ENCODE measurements at regions of chr9 and their contacts with region 1.

Region 1: DNA sequence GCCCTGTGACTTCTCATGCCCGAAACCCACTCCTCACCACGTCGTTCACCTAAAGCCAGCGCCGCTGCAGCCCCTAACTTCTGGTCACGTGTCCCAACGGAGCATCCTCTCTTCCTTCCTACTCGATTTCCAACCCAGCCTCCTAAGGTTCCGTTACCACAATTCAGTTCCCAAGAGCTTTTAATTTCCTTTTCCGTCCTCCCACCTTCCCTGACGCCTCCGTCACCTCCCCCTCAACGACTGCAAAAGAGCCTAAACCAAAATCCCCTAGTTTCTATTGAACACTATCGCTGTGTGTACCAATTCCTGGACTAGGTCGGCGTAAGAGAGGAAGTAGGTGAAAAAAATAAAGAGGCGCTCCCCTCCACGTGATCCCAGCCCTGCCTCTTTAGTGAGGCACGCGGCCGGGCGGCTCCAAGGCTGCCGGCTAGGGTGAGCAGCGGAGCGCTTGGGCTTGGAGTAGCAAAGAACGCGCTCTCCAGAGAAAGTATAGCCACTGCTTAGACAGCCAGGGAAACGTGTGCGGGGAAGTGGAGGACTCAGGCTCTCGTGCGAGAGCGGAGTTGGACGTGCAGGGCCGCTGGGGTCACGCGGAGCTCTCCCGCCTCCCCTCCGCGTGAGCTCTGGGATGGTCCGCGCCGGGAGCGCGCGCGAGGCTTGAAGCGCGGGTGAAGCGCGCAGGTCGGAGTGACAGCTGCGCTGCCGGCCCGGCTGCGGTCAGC is at the starts of genes CENPP and NOL8:
- DNase-seq: peak; percentile 95
- H3K4me3 Mint-ChIP-seq: peak within 1 kb of the TSS; percentile 98
- H3K27ac Mint-ChIP-seq: peak within 1 kb of the TSS; percentile 97
- H3K4me1 Mint-ChIP-seq: peaks cover 31% of the 10 kb centered on the region
- H3K27me3 Mint-ChIP-seq: no peaks in the 10 kb centered on the region
- total RNA-seq, gene CENPP: 26.9 and 27.5 TPM in 2 replicates
- total RNA-seq, gene NOL8: 84.9 and 90.9 TPM in 2 replicates

Region 2: DNA sequence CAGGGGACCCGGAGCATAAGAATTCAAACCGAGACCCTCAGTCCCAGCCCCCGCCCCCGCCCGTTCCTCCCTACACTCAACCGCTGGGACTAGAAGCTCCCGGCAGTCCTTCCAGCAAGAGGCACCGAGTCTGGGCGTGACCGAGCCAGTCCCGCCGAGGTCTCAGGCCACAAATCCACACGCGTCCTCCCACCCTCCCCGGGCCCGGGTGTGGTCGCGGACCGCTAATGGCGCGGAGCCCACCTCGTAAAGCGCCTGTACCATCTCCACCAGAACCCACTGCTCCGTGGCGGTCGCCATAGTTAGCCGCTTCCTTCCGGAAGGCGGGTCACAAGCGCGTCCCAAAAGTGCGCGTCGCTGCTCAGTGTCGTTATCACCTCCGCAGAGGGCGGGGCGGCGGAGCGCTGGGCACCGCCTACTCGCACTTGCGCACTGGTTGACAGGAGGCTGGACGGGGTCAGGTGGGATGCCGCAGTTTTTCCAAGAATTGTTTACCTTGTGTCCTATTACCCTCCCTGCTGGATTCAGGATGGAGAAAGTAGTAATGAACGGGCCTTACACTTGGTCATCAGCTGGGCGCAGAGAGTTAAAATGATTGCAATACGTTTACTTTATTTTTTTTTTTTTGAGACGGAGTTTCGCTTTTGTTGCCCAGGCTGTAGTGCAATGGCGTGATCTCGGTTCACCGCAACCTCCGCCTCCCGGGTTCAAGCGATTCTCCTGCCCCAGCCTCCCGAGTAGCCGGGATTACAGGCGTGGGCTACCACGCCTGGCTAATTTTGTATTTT is 210.2 kb before region 1 on chr9 and contains the start of gene SPTLC1:
- intact Hi-C with region 1: loop called (anchors 10 kb)
- DNase-seq: peak; percentile 99
- H3K4me3 Mint-ChIP-seq: peak within 1 kb of the TSS; percentile 97
- H3K27ac Mint-ChIP-seq: peak within 1 kb of the TSS; percentile 98
- H3K4me1 Mint-ChIP-seq: peaks cover 21% of the 10 kb centered on the region
- H3K27me3 Mint-ChIP-seq: peaks cover 2% of the 10 kb centered on the region
- total RNA-seq, gene SPTLC1: 62.5 and 64.9 TPM in 2 replicates

Region 3: DNA sequence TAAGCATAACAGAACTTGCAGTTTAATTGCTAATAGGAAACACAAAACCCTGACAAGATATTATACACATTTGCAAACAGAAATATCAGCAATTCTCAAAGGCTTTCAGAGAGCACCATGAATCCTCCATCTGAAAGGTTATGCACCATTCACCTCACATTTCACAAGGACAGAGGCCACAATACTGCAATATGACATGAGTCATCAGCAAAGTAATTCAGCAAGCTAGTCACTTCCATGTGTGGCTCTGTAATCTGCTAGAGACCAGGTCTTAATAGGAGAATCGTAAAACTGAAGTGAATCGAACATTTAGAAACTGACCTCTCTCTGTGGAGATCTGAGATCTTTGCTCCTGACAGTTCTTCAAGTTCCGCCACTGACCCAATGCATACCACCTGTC is 60.3 kb before region 1 on chr9:
- intact Hi-C with region 1: no loop called
- DNase-seq: no peak
- H3K4me3 Mint-ChIP-seq: no peak overlapping the region
- H3K27ac Mint-ChIP-seq: no peak overlapping the region
- H3K4me1 Mint-ChIP-seq: no peaks in the 10 kb centered on the region
- H3K27me3 Mint-ChIP-seq: no peaks in the 10 kb centered on the region

Region 4: GRCh38 chr9:92634712-92635605 is 309.5 kb after region 1 on chr9:
- intact Hi-C with region 1: loop called (anchors 1 kb)
- DNase-seq: peak; percentile 90
- H3K4me3 Mint-ChIP-seq: no peak overlapping the region
- H3K27ac Mint-ChIP-seq: no peak overlapping the region
- H3K4me1 Mint-ChIP-seq: peaks cover 8% of the 10 kb centered on the region
- H3K27me3 Mint-ChIP-seq: no peaks in the 10 kb centered on the region

Measured in activated CD4-positive, alpha-beta T cell treated with anti-CD3 and anti-CD28 coated beads, Interleukin-2, amount 10 ng/mL, durations not matched to agents 24 days and 14 days (primary cell).